OCI-LY7 (cell line): ENCODE measurements at regions of chr12 and their contacts with region 1.

Region 1: DNA sequence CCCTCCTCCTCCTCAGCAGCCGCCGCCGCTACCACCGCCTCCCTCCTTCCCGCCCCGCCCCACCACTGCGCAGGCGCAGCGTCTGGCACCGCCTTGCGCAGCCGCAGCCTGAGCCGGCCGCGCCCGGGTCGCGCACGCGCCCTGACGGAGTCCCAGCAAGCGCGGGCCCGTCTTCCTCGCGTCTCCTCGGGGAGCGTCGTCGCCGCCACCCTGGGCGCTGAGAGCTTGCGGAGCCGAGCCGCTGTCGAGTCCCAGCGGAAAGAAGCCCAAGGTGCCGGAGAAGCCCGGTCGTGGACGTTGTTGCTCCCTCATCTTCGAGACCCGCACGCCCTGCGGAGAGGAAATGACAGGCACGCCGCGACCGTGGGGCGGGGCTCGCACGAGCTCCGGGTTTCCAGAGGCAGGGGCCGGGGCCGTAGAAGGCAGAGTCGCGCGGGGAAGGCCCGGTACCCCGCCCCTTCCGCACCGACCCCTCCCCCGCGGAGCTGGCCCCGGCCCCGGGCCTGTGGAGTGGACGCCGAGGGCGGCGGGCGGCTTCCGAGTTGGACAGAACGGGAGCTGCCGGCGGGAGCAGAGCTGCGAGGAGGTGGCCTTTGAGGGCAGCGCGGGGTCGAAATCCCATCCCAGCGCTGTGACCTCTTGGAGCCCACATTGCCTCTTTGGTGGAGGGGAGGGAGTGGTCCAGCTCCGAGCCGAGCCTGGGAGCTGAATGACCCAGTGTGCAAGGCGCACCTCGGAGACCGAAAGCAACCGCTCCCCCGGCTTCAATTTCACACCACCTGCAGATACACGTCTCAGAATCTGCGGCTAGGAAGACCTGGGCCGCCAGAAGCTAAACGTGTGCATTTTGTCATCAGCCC is 469 bp upstream of the RAB35 start:
- DNase-seq: peak; percentile 93
- H3K4me3 ChIP-seq: peak overlapping the region; percentile 90
- H3K27ac ChIP-seq: peak overlapping the region; percentile 77
- H3K4me1 ChIP-seq: peaks cover 56% of the 10 kb centered on the region
- CTCF ChIP-seq: no peak

Region 2: GRCh38 chr12:120132863-120133385 is 15.9 kb after region 1 on chr12:
- CTCF ChIA-PET with region 1: interaction called, 3 read pairs
- POLR2A ChIA-PET with region 1: interaction called, 48 read pairs
- intact Hi-C with region 1: loop called (anchors 1 kb)
- DNase-seq: peak; percentile 83
- H3K4me3 ChIP-seq: peak overlapping the region; percentile 39
- H3K27ac ChIP-seq: peak overlapping the region; percentile 92
- H3K4me1 ChIP-seq: peaks cover 33% of the 10 kb centered on the region
- CTCF ChIP-seq: no peak

Region 3: GRCh38 chr12:120346681-120347080 is 229.7 kb after region 1 on chr12:
- CTCF ChIA-PET with region 1: no interaction called
- POLR2A ChIA-PET with region 1: no interaction called
- intact Hi-C with region 1: no loop called
- DNase-seq: no peak
- H3K4me3 ChIP-seq: no peak overlapping the region
- H3K27ac ChIP-seq: no peak overlapping the region
- H3K4me1 ChIP-seq: no peaks in the 10 kb centered on the region
- CTCF ChIP-seq: no peak